ENCODE measurements at regions of chr1 and their contacts with region 1.

Region 1: DNA sequence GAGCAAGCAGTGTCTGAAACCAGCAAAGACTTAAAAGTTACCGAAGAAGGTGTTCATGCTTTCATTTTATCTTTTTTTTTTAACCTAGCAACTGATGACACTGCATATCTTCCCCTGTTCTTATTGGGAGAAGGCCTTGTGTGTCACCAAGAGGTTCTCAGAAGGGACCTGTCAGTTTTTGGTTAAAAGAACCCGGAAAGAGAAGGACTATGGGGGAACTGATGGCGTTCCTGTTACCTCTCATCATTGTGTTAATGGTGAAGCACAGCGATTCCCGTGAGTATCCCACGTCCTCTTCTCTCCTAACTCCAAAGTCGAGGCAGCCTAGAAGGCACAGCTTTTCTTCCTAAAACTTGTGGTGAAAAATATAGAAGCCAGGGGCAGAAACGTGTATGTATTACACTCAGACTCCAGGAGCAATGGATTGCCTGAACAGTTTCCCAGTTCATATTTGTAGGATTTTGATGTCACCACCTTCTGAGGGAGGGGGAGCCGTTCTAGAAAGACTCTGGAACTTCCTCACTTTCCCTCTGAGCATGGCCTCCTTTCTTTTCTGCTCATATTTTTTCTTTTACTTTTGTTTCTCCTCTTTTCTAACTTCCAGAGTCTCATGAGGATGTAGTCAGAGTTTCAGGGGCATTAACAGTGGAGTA is at the start of gene MR1:
- DNase-seq: peak in 1 of 2 donors; percentile 68
- H3K4me3 ChIP-seq: peak within 1 kb of the TSS; percentile 46 to 67
- H3K27ac ChIP-seq: peak within 1 kb of the TSS; percentile 94 to 96
- H3K4me1 ChIP-seq: peaks cover 0 to 28% of the 10 kb centered on the region in 2 donors
- H3K27me3 ChIP-seq: no peaks in the 10 kb centered on the region
- CTCF ChIP-seq: no peak
- total RNA-seq, gene MR1: 19.2 TPM

Region 2: GRCh38 chr1:180912801-180913565 is 120.9 kb before region 1 on chr1 and contains the start of gene KIAA1614:
- intact Hi-C with region 1: loop called (anchors 5 kb)
- DNase-seq: peak in 1 of 2 donors; percentile 66
- H3K4me3 ChIP-seq: peak within 1 kb of the TSS; percentile 62 to 88
- H3K27ac ChIP-seq: peak within 1 kb of the TSS; percentile 86 to 97
- H3K4me1 ChIP-seq: peaks cover 0 to 8% of the 10 kb centered on the region in 2 donors
- H3K27me3 ChIP-seq: no peaks in the 10 kb centered on the region
- CTCF ChIP-seq: no peak
- total RNA-seq, gene KIAA1614: 21.9 TPM

Region 3: GRCh38 chr1:181166377-181167196 is 132.7 kb after region 1 on chr1:
- intact Hi-C with region 1: loop called (anchors 5 kb)
- DNase-seq: peak in 1 of 2 donors; percentile 83
- H3K4me3 ChIP-seq: no peak overlapping the region
- H3K27ac ChIP-seq: no peak overlapping the region
- H3K4me1 ChIP-seq: peaks cover 0 to 2% of the 10 kb centered on the region in 2 donors
- H3K27me3 ChIP-seq: no peaks in the 10 kb centered on the region
- CTCF ChIP-seq: peak; percentile 83 to 85 (median 84)

Measured in ascending aorta (tissue), 2 donors.